A673 (cell line): ENCODE measurements at regions of chr14 and their contacts with region 1.

Region 1: GRCh38 chr14:58637391-58638230 is at the start of gene DACT1:
- DNase-seq: peak; percentile 69
- H3K4me3 ChIP-seq: peak within 1 kb of the TSS; percentile 62
- H3K27ac ChIP-seq: peak within 1 kb of the TSS; percentile 49
- H3K4me1 ChIP-seq: peaks cover 11% of the 10 kb centered on the region
- H3K27me3 ChIP-seq: peaks cover 14% of the 10 kb centered on the region
- CTCF ChIP-seq: no peak
- total RNA-seq, gene DACT1: 4.7 and 5.1 TPM in 2 replicates

Region 2: GRCh38 chr14:58107947-58108552 is 529.6 kb before region 1 on chr14:
- CTCF ChIA-PET with region 1: no interaction called
- POLR2A ChIA-PET with region 1: no interaction called
- intact Hi-C with region 1: loop called (anchors 5 kb)
- DNase-seq: peak; percentile 72
- H3K4me3 ChIP-seq: no peak overlapping the region
- H3K27ac ChIP-seq: no peak overlapping the region
- H3K4me1 ChIP-seq: no peaks in the 10 kb centered on the region
- H3K27me3 ChIP-seq: no peaks in the 10 kb centered on the region
- CTCF ChIP-seq: peak; percentile 82

Region 3: DNA sequence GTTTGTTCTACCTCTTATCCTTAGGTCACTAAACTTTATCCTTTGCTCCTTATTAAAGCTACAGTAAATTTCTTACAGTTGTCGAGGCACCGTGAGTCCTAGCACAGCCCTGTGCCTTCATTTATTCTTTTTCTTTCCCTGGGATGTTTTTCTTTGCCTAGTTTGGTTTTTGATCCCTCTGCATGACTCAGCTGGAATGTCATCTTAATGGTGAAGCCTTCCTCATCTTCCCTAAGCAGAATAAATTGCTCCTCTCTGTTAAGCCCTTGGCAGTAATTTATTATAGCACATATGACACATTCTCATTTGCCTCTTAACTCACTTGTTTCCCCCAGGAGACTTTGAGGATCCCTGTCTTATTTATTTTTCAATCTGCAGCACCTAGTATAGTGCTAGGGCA is 421.1 kb before region 1 on chr14:
- CTCF ChIA-PET with region 1: no interaction called
- POLR2A ChIA-PET with region 1: no interaction called
- intact Hi-C with region 1: no loop called
- DNase-seq: peak; percentile 40
- H3K4me3 ChIP-seq: no peak overlapping the region
- H3K27ac ChIP-seq: peak overlapping the region; percentile 62
- H3K4me1 ChIP-seq: peaks cover 6% of the 10 kb centered on the region
- H3K27me3 ChIP-seq: no peaks in the 10 kb centered on the region
- CTCF ChIP-seq: no peak

Region 4: GRCh38 chr14:58501214-58501816 is 136.3 kb before region 1 on chr14:
- CTCF ChIA-PET with region 1: interaction called, 23 read pairs
- POLR2A ChIA-PET with region 1: interaction called, 17 read pairs
- intact Hi-C with region 1: loop called (anchors 1 kb)
- DNase-seq: peak; percentile 74
- H3K4me3 ChIP-seq: no peak overlapping the region
- H3K27ac ChIP-seq: no peak overlapping the region
- H3K4me1 ChIP-seq: no peaks in the 10 kb centered on the region
- H3K27me3 ChIP-seq: no peaks in the 10 kb centered on the region
- CTCF ChIP-seq: peak; percentile 89

Region 5: DNA sequence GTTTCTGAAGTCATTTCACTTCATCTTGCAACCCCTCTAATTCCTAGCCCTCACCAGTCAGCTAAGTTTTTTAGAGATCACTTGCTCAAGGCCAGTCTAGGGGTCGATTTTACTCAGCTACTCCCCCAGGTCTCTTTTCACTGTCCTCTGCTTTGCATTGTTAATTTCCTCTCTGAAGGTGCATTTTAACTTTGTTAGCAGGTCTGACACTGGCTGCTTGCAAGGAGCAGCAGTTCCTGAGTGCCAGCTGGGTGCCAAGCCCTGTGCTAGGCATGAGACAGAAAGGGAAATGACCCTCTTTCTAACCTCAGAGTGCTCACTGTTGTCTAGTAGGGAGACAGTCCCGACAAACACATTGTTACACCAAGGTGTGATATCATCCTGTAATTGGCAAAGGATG is 17.6 kb before region 1 on chr14:
- CTCF ChIA-PET with region 1: no interaction called
- POLR2A ChIA-PET with region 1: interaction called, 23 read pairs
- intact Hi-C with region 1: no loop called
- DNase-seq: no peak
- H3K4me3 ChIP-seq: no peak overlapping the region
- H3K27ac ChIP-seq: no peak overlapping the region
- H3K4me1 ChIP-seq: peaks cover 16% of the 10 kb centered on the region
- H3K27me3 ChIP-seq: no peaks in the 10 kb centered on the region
- CTCF ChIP-seq: no peak

Region 6: GRCh38 chr14:59020382-59020781 is 382.8 kb after region 1 on chr14:
- CTCF ChIA-PET with region 1: interaction called, 4 read pairs
- POLR2A ChIA-PET with region 1: interaction called, 16 read pairs
- intact Hi-C with region 1: loop called (anchors 2 kb)
- DNase-seq: peak; percentile 50
- H3K4me3 ChIP-seq: no peak overlapping the region
- H3K27ac ChIP-seq: no peak overlapping the region
- H3K4me1 ChIP-seq: no peaks in the 10 kb centered on the region
- H3K27me3 ChIP-seq: no peaks in the 10 kb centered on the region
- CTCF ChIP-seq: peak; percentile 64

Region 7: DNA sequence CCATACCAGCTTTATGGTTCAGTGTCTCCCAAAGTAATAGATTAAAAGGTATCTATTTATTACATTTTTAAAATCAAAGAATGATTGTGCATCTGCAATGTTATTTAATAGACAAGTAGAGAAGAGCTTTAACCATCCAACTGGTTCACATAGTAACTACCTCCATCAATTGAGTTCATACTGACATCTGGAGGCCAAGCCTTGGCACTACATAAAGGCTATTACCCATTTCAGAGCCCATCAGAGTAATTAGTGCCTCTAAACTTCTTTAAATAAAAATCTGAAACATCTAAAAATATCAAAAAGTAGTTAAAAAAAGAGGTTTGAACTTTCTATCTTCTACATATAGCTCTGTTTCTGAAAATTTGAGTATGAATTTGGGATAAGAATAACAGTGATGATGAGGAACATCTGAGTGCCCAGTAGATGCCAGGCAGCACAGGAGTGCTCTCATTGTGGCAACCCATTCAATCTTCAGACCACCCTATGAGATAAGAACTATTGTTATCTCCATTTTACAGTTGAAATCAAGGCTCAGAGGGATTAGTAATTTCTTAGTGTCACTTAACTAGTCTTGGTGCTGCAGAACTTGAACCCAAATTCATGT is 417.9 kb after region 1 on chr14:
- CTCF ChIA-PET with region 1: interaction called, 4 read pairs
- POLR2A ChIA-PET with region 1: no interaction called
- intact Hi-C with region 1: loop called (anchors 1 kb)
- DNase-seq: peak; percentile 56
- H3K4me3 ChIP-seq: no peak overlapping the region
- H3K27ac ChIP-seq: no peak overlapping the region
- H3K4me1 ChIP-seq: no peaks in the 10 kb centered on the region
- H3K27me3 ChIP-seq: peaks cover 1% of the 10 kb centered on the region
- CTCF ChIP-seq: peak; percentile 79

Region 8: GRCh38 chr14:59116984-59117415 is 479.4 kb after region 1 on chr14:
- CTCF ChIA-PET with region 1: no interaction called
- POLR2A ChIA-PET with region 1: no interaction called
- intact Hi-C with region 1: loop called (anchors 5 kb)
- DNase-seq: no peak
- H3K4me3 ChIP-seq: no peak overlapping the region
- H3K27ac ChIP-seq: no peak overlapping the region
- H3K4me1 ChIP-seq: no peaks in the 10 kb centered on the region
- H3K27me3 ChIP-seq: no peaks in the 10 kb centered on the region
- CTCF ChIP-seq: no peak

Region 9: GRCh38 chr14:59262717-59263454 is 625.3 kb after region 1 on chr14:
- CTCF ChIA-PET with region 1: no interaction called
- POLR2A ChIA-PET with region 1: no interaction called
- intact Hi-C with region 1: no loop called
- DNase-seq: no peak
- H3K4me3 ChIP-seq: no peak overlapping the region
- H3K27ac ChIP-seq: no peak overlapping the region
- H3K4me1 ChIP-seq: no peaks in the 10 kb centered on the region
- H3K27me3 ChIP-seq: no peaks in the 10 kb centered on the region
- CTCF ChIP-seq: peak; percentile 20; the same call in 1 of the 2 replicates